ENCODE measurements at regions of chrX and their contacts with region 1.

Region 1: DNA sequence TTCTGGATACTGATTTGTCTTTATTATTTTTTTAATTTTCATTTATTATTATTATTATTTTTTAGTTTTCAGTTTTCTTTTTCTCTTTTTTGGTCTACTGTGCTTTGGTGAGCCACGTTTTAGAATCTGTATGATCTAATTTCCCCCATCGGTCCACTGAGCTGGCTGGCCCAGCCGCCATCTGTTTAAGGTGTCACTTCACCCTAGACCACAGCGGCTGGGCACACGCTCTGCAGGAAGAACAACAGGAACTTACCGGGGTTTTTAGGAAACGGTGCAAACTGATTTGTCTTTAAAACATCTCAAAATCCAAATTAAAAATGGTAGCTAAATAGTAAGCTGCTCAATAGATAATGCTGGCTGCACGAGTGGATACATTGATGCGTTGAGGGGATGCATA is 48.8 kb upstream of the AMOT start:
- DNase-seq: no peak
- H3K4me3 ChIP-seq: no peak overlapping the region
- H3K27ac ChIP-seq: no peak overlapping the region
- H3K4me1 ChIP-seq: peaks cover 8% of the 10 kb centered on the region
- CTCF ChIP-seq: no peak

Region 2: DNA sequence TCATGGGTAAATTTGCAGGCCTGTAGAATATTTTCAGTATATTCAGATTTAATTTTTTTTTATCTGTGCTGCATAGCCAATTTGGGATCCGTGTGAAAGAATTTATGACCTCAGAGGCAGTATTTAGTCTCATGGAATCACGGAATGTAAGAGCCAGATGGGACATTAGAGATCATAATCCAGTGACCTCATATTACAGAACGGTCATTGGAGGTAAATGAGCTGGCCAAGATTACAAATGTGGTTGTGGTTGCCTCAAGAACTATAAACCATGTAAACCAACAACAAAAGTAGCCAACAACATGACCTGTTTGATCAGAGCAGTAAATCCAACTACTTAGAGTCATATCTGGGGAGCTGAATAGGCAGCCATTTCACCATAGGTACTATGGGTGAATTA is 120.4 kb before region 1 on chrX:
- CTCF ChIA-PET with region 1: no interaction called
- POLR2A ChIA-PET with region 1: no interaction called
- intact Hi-C with region 1: no loop called
- DNase-seq: no peak
- H3K4me3 ChIP-seq: no peak overlapping the region
- H3K27ac ChIP-seq: no peak overlapping the region
- H3K4me1 ChIP-seq: no peaks in the 10 kb centered on the region
- CTCF ChIP-seq: no peak

Region 3: DNA sequence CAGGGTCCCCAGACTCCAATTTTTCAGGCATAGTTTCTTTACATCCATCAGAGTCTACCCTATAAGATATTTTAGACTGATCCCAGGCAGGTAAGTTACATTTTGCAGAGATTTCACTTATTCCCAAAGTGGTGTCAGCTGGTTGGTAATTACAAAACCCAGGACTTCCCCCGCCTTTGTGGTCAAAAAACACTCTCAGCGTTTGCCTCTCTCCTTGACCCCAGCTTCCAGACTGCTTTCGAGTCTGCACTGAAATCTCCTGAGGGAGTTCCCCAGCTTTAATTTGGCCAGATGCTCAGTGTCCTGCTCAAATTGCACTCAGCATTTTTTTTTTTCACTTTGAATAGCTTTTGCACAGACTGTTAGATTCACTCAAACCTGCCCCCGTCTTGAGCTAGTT is 37.6 kb before region 1 on chrX:
- CTCF ChIA-PET with region 1: no interaction called
- POLR2A ChIA-PET with region 1: interaction called, 4 read pairs
- intact Hi-C with region 1: loop called (anchors 1 kb)
- DNase-seq: no peak
- H3K4me3 ChIP-seq: no peak overlapping the region
- H3K27ac ChIP-seq: no peak overlapping the region
- H3K4me1 ChIP-seq: peaks cover 35% of the 10 kb centered on the region
- CTCF ChIP-seq: no peak

Region 4: GRCh38 chrX:112901869-112902725 is 12.7 kb after region 1 on chrX:
- CTCF ChIA-PET with region 1: no interaction called
- POLR2A ChIA-PET with region 1: no interaction called
- intact Hi-C with region 1: no loop called
- DNase-seq: no peak
- H3K4me3 ChIP-seq: no peak overlapping the region
- H3K27ac ChIP-seq: no peak overlapping the region
- H3K4me1 ChIP-seq: no peaks in the 10 kb centered on the region
- CTCF ChIP-seq: no peak

Measured in OCI-LY7 (cell line).